Dorsolateral prefrontal cortex (tissue), 120 donors: ENCODE measurements at regions of chr5 and their contacts with region 1.

Region 1: GRCh38 chr5:142128675-142129208 is 20.2 kb downstream of the NDFIP1 start:
- DNase-seq: no peak
- H3K4me3 ChIP-seq: no peak overlapping the region
- H3K27ac ChIP-seq: no peak overlapping the region
- H3K27me3 ChIP-seq: no peaks in the 10 kb centered on the region
- CTCF ChIP-seq: no peak

Region 2: DNA sequence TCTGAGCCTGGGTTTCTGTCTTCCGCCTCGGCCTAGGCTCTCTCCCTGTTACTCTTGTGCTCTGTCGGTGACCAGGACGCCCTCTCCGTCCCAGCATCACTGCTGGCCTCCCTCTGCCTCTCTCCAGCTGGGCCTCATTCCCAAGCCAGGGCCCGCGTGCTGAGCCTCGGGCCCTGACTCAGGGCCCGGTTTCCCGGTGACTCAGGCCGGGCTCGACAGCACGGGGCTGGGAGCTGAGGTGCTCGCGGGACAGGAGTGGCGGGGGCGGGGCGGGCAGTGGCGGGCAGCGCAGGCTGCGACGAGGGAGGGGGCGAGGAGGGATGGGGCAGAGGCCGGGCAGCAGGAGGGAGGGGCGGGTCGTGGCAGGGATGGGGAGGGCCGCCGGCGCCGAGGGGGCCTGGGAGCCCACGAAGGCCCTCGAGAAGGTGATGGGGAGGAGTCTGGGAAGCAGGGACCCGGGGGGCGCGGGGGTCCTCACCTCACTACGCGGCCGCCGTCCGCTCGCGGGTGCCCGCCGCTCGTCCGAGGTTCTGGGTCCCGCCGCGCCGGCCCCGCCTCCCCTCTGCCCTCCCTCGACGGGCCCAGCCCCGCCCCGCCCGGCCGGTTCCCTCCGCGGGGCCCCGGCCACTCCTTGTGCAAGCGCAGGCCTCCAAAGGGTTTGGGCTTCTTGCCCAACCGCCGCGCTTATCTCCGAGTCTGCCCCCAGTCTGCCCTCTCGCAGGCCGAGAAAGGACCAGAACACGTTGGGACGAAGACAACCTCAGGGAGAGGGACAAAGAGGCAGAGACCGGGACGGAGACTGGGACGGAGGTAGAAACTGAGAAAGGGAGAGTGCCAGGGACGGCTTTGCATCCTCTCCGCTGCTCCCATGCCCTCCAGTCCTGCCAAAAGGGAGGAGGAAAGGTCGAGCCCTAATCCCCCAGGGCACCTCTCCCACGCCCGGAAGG is 446.8 kb before region 1 on chr5 and contains the start of gene ARAP3:
- intact Hi-C with region 1: loop called in 1 of 2 experiments (anchors 10 kb)
- DNase-seq: peak in 2 of 10 donors; percentile 43 to 50
- H3K4me3 ChIP-seq: peak within 1 kb of the TSS in 58 of 59 donors; percentile 14 to 65 (median 50)
- H3K27ac ChIP-seq: peak within 1 kb of the TSS in 42 of 59 donors; percentile 14 to 82 (median 56)
- H3K27me3 ChIP-seq: no peaks in the 10 kb centered on the region
- CTCF ChIP-seq: no peak
- total RNA-seq, gene ARAP3: 3.8 to 24.9 (median 10.5) TPM

Region 3: DNA sequence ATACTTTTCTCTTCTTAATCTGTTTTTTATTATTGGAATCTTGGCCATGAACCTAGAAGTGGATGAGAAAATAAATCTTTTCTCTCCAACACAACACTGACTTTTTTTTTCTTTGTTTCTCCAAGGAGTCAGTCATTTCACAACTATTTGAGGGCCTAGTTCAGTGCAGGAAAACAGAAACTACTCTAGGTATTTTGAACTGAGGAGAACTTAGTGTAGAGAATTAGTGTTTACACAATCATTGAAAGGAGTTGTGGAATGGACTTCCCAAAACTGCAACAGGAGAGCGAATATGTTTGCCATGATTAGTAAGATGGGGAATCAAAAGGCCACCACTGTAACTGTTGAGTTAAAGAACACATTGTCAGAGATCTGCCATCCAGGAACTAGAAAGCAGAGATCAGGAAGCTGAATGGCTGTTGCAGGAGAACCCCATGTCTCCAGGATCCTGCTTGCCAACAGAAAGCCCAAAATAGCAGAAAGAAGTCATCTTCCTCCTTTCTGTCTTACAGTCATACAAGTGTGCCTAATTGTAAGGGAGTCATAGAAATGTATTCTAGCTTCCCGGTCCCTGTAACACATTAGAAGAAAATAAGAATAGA is 230.2 kb before region 1 on chr5:
- intact Hi-C with region 1: no loop called
- DNase-seq: no peak
- H3K4me3 ChIP-seq: no peak overlapping the region
- H3K27ac ChIP-seq: peak overlapping the region in 17 of 59 donors; percentile 0 to 51 (median 14)
- H3K27me3 ChIP-seq: no peaks in the 10 kb centered on the region
- CTCF ChIP-seq: no peak